Left lung (tissue), 14 donors: ENCODE measurements at regions of chr18 and their contacts with region 1.

Region 1: GRCh38 chr18:55589625-55590291 is 1.8 kb upstream of the TCF4 start:
- DNase-seq: peak; percentile 94 to 99 (median 98)
- ATAC-seq: peak; percentile 98
- H3K4me3 ChIP-seq: peak overlapping the region; percentile 56 to 61
- H3K27ac ChIP-seq: peak overlapping the region; percentile 86 to 91
- H3K4me1 ChIP-seq: peaks cover 0 to 17% of the 10 kb centered on the region in 2 donors
- H3K27me3 ChIP-seq: no peaks in the 10 kb centered on the region
- CTCF ChIP-seq: no peak

Region 2: DNA sequence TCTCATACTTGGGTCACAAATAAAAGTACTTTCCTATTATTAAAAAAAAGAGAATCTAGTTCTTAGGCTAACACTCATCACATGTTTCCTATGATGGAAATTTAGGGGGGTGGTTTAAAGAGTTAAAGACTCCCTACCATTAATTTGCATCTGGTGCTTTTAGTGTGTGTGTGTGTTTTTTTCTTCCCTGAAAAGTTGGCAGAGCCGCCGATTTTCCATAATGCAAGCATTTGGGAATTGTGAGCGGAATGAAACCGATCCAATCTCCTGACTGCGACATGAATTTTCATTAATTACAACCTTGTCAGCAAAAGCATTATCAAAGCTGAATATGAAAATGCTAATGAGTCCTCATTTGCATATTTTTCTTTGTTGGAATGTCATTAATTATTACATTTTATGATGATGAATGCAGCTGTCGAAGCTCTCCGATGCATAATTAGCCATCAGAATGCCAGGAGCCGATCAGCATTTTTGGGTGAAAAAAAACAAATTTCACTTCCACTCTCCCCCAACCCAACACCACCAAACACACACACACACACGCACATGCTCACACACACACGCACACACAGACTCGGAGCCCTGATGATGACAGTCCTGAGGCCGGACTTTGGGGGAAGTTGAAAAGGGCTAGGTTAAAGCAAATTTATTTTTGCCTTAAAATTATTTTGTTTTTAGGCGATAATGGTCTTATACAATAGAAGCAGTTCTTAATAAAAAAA is 167.1 kb before region 1 on chr18:
- intact Hi-C with region 1: loop called in 1 of 2 experiments (anchors 5 kb)
- DNase-seq: peak in 2 of 4 donors; percentile 44 to 79
- ATAC-seq: peak; percentile 40
- H3K4me3 ChIP-seq: no peak overlapping the region
- H3K27ac ChIP-seq: peak overlapping the region; percentile 68 to 70
- H3K4me1 ChIP-seq: peaks cover 0 to 20% of the 10 kb centered on the region in 2 donors
- H3K27me3 ChIP-seq: no peaks in the 10 kb centered on the region
- CTCF ChIP-seq: no peak

Region 3: DNA sequence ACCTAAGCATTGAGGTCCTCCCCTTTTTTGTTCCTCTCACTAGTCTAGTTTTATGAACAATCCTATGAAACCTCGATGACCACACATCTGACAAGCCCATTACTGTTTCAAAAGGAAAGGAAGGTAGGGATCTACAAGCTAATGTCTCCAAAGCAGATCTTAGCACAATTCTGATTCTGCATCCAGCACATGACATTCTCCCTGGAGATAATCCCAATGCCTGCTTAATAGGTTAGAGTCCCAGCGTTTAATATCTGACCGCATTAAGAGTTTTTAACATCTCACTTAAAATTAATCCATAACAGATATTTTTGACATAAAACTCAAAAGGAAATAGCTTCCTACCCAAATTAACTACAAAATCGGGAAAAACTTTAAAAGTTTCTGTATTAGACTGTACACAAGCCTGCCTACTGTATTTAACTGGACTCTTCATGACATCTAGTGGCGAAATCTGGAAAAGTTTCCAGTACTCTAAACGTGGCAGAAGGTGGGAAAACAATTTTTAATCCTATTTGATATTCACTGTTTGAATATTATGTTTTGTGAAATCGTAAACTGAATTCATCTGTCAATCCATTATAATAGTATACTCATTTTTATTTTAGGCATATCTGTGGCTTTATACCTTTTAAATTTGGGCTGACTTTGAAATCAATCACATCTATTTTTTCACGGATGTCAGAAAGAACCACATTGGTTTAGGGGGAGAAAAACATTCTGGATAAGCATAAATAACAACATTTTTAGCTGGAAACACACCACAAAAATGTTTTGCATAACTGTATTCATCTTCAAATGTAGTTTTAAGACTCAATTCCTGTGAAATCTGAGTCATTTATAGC is 986.3 kb after region 1 on chr18:
- intact Hi-C with region 1: loop called in 1 of 2 experiments (anchors 10 kb)
- DNase-seq: peak in 2 of 4 donors; percentile 44 to 69
- ATAC-seq: peak; percentile 93
- H3K4me3 ChIP-seq: no peak overlapping the region
- H3K27ac ChIP-seq: peak overlapping the region in 1 of 2 donors; percentile 19
- H3K4me1 ChIP-seq: peaks cover 9 to 23% of the 10 kb centered on the region in 2 donors
- H3K27me3 ChIP-seq: no peaks in the 10 kb centered on the region
- CTCF ChIP-seq: peak; percentile 65